ENCODE measurements at regions of chr3 and their contacts with region 1.

Region 1: GRCh38 chr3:150798122-150798626 is 35.2 kb upstream of the SIAH2 start:
- DNase-seq: no peak
- H3K4me3 ChIP-seq: no peak overlapping the region
- H3K27ac ChIP-seq: no peak overlapping the region
- H3K4me1 ChIP-seq: peaks cover 0 to 13% (median 3%) of the 10 kb centered on the region in 6 donors
- H3K27me3 ChIP-seq: peaks cover 0 to 9% (median 0%) of the 10 kb centered on the region in 7 donors
- CTCF ChIP-seq: no peak
- POLR2A ChIP-seq: no peak

Region 2: GRCh38 chr3:150868282-150868681 is 70.1 kb after region 1 on chr3:
- intact Hi-C with region 1: loop called (anchors 10 kb)
- DNase-seq: no peak
- H3K4me3 ChIP-seq: no peak overlapping the region
- H3K27ac ChIP-seq: no peak overlapping the region
- H3K4me1 ChIP-seq: peaks cover 0 to 9% (median 0%) of the 10 kb centered on the region in 6 donors
- H3K27me3 ChIP-seq: peaks cover 0 to 7% (median 0%) of the 10 kb centered on the region in 7 donors
- CTCF ChIP-seq: no peak
- POLR2A ChIP-seq: no peak

Region 3: DNA sequence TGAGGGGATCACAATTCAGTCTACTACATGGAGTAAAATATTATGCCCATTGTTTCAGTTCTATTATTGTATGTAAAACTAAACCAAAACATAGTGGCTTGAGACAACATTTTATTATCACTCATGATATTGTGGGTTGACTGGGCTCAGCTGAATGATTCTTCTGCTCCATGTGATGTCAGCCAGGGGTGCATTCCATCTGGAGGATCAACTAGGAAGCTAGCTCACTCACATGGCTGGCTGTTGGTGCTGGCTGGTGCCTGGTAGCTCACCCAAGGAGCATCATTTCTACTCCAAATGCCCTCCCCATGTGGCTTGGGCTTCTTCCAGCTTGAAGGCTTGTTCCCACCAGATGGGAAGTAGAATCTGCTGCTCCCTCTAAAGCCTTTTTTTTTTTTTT is 226.2 kb after region 1 on chr3:
- intact Hi-C with region 1: no loop called
- DNase-seq: no peak
- H3K4me3 ChIP-seq: no peak overlapping the region
- H3K27ac ChIP-seq: no peak overlapping the region
- H3K4me1 ChIP-seq: no peaks in the 10 kb centered on the region
- H3K27me3 ChIP-seq: no peaks in the 10 kb centered on the region
- CTCF ChIP-seq: no peak
- POLR2A ChIP-seq: no peak